Activated T-helper 1 cell treated with anti-CD3 and anti-CD28 coated beads, Interleukin-12 subunit alpha, Interleukin-12 subunit beta, Interleukin-2, Interleukin-4 antibody, amounts not matched to agents 30 ng/mL and 10 ng/mL and 1 ng/mL, durations not matched to agents 14 hours and 24 hours and 36 hours (primary cell): ENCODE measurements at regions of chr7 and their contacts with region 1.

Region 1: DNA sequence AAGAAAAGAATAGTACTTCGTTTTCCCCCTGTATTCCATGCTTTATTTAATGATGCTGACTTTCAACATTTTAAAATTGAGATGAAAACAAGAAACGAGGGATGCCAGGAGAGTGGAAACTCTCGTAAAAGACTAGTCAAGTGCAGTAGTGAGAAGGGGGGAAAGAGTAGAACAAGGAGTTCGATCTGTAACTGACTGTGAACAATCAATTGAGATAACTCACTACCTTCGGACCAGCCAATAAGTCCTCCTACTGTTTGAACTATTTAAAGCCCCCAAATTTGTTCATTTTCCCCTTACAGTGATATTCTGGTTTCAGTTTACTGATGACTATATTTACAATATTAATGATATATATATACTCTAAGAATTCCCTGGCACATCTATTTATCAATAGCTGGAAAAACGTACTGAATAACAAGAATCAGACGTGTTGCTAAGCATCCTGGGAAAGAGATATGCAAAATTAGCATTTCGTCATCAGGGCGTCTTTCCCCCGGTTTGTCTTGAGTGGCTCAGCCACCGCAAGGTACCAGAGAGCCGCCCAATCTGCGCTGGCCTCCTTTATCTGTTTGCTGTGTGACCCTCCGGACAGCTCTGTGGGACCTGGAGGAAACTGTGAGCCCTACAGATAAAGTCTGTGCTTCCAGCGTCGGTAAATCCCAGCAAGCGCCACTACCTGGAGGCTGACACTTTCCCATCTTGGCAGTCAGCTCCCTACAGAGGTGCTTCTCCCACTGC is 41.1 kb downstream of the PDIA4 start:
- DNase-seq: peak; percentile 78
- H3K4me3 Mint-ChIP-seq: peak overlapping the region; percentile 94
- H3K27ac Mint-ChIP-seq: peak overlapping the region; percentile 92
- H3K4me1 Mint-ChIP-seq: peaks cover 46% of the 10 kb centered on the region
- H3K27me3 Mint-ChIP-seq: peaks cover 21% of the 10 kb centered on the region

Region 2: DNA sequence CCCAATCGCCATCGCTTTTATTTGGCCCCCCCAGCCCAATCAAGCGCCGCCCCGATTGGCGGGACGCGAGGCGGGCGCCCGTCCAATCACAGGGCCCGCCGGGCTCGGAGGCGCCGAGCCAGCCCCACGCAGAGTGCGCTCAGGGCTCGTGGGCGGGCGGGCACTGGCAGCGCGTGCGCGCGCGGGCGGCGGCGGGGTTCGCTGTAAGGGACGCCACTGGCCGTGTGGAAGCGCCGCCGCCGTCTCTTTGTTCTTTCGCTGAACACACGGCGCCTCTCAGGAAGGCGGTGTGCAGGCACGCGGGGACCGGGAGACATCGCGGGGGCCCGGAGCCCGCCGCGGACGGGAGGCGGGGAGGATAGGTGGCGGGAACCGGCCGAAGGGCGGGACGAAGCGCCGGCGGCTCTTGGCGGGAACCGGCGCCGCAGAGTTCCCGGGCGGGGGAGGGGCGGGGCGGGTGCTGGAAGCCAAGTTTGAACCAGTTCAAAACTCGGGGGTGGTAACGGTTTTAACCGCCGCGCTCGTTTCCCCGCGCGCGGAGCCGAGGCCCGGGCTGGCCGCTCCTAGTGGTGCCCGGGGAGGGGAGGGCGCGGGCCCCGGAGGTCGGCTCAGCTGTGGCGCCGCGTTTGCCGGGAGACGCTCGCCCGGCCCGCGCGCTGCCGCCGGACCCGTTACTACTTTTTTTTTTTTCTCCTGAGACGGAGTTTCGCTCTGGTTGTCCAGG is 102.7 kb before region 1 on chr7:
- intact Hi-C with region 1: loop called (anchors 1 kb)
- DNase-seq: peak; percentile 95
- H3K4me3 Mint-ChIP-seq: peak overlapping the region; percentile 93
- H3K27ac Mint-ChIP-seq: peak overlapping the region; percentile 98
- H3K4me1 Mint-ChIP-seq: peaks cover 43% of the 10 kb centered on the region
- H3K27me3 Mint-ChIP-seq: no peaks in the 10 kb centered on the region

Region 3: GRCh38 chr7:148940702-148941597 is 46.2 kb before region 1 on chr7:
- intact Hi-C with region 1: loop called (anchors 1 kb)
- DNase-seq: peak; percentile 65
- H3K4me3 Mint-ChIP-seq: peak overlapping the region; percentile 96
- H3K27ac Mint-ChIP-seq: peak overlapping the region; percentile 98
- H3K4me1 Mint-ChIP-seq: peaks cover 31% of the 10 kb centered on the region
- H3K27me3 Mint-ChIP-seq: no peaks in the 10 kb centered on the region

Region 4: GRCh38 chr7:149067876-149068275 is 80.7 kb after region 1 on chr7:
- intact Hi-C with region 1: loop called (anchors 1 kb)
- DNase-seq: no peak
- H3K4me3 Mint-ChIP-seq: peak overlapping the region; percentile 12
- H3K27ac Mint-ChIP-seq: no peak overlapping the region
- H3K4me1 Mint-ChIP-seq: peaks cover 8% of the 10 kb centered on the region
- H3K27me3 Mint-ChIP-seq: no peaks in the 10 kb centered on the region

Region 5: DNA sequence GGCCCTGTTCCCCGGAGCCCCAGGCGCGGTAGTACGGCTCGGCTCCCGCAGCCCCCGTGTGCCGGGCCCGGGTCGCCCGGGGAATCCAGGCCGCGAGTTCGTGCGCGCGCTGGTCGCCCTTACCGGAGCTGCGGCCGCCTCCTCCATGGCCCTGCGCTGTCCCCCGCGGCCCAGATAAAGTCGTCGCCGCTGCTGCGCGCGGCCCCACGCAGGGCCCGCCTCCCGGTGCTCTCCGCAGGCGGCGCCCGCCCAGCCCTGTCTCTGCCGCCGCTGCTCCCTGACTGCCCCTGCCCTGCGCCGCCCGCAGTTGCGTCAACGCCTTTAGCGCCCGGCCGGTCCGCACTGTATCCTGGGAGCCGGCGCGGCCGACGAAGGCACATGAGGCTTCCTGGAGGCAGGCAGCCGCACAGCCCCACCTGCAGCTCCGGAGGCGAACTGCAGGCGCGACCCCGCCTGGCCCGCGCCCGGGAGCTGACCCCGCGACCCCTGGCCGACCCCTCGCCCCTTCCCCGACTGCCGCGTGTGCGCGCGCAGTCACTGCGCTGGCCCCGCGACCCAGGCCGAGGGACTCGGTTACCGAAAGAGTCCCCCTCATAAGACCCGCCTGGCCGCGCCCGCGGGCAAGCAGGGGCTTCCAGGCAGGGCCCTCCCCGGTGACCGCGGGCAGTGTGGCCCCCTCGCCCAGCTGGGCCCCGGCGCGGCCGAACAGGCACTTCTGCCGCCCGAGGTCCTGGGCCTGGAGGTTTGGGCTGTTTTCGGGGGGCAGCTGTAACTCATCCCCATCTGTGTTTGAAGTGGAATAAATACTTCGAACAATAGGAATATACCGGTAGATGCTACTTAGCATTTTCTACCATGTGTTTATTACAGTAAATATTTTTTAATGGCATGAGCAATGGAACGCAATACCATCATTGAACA is 637.5 kb after region 1 on chr7:
- intact Hi-C with region 1: loop called (anchors 1 kb)
- DNase-seq: peak; percentile 91
- H3K4me3 Mint-ChIP-seq: peak overlapping the region; percentile 89
- H3K27ac Mint-ChIP-seq: peak overlapping the region; percentile 83
- H3K4me1 Mint-ChIP-seq: peaks cover 32% of the 10 kb centered on the region
- H3K27me3 Mint-ChIP-seq: peaks cover 6% of the 10 kb centered on the region